Caco-2 (cell line): ENCODE measurements at regions of chr3 and their contacts with region 1.

Region 1: DNA sequence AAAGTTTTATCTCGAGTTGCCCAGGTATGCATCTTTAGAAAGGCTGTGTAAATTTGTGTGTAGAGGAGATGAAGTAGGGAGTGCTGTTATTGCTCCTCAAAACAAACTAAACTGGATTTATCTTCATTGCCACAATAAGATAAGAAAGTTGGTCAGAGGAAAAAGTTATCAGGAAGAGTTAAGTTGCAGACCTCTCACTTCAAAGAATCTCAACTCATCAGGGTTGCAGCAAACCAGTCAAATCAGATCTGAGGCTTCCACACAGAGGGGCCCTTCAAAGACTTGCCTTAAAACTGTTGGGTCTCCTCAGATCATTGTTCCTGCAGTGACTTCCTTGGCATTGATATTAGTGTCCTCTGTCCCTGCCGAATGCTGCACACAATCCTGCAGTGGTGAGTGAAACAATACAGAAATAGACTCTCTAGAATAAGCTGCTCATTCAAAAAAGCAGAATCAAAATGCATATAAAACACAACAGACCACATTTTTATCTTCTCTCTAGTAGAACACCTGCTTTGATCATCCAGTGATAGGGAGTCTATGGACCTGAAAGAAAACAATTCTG is 191.2 kb upstream of the CBLB start:
- DNase-seq: peak; percentile 49 to 51
- H3K4me3 ChIP-seq: no peak overlapping the region
- H3K4me3 Mint-ChIP-seq: no peak overlapping the region
- H3K27ac Mint-ChIP-seq: no peak overlapping the region
- H3K4me1 ChIP-seq: peaks cover 36% of the 10 kb centered on the region
- H3K4me1 Mint-ChIP-seq: peaks cover 16% of the 10 kb centered on the region
- H3K27me3 ChIP-seq: no peaks in the 10 kb centered on the region
- H3K27me3 Mint-ChIP-seq: no peaks in the 10 kb centered on the region
- CTCF ChIP-seq: no peak

Region 2: GRCh38 chr3:106013971-106014370 is 46.1 kb before region 1 on chr3:
- CTCF ChIA-PET with region 1: no interaction called
- POLR2A ChIA-PET with region 1: no interaction called
- intact Hi-C with region 1: loop called (anchors 1 kb)
- DNase-seq: peak; percentile 49 to 57
- H3K4me3 ChIP-seq: no peak overlapping the region
- H3K4me3 Mint-ChIP-seq: peak overlapping the region; percentile 49
- H3K27ac Mint-ChIP-seq: peak overlapping the region; percentile 48
- H3K4me1 ChIP-seq: peaks cover 25% of the 10 kb centered on the region
- H3K4me1 Mint-ChIP-seq: peaks cover 7% of the 10 kb centered on the region
- H3K27me3 ChIP-seq: no peaks in the 10 kb centered on the region
- H3K27me3 Mint-ChIP-seq: no peaks in the 10 kb centered on the region
- CTCF ChIP-seq: no peak

Region 3: DNA sequence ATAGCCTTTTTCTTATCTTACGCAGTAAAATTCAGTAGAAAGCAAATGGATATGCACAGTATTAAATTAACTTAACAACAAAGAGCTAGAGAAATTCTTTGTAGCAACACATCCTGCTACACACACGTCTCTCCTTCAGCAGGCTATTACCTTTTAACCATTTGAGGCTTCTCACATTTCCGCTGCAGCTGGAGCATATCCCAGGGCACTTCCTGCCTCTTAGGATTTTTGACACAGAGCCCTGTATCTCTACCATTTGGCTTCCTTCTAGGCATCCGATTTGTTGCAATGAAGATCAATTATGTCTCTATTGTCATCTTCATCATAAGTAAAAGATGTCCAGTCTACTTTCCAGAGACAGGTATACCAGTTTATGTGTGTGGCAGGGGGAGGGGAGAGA is 101.2 kb after region 1 on chr3:
- CTCF ChIA-PET with region 1: no interaction called
- POLR2A ChIA-PET with region 1: no interaction called
- intact Hi-C with region 1: no loop called
- DNase-seq: no peak
- H3K4me3 ChIP-seq: no peak overlapping the region
- H3K4me3 Mint-ChIP-seq: no peak overlapping the region
- H3K27ac Mint-ChIP-seq: no peak overlapping the region
- H3K4me1 ChIP-seq: peaks cover 9% of the 10 kb centered on the region
- H3K4me1 Mint-ChIP-seq: no peaks in the 10 kb centered on the region
- H3K27me3 ChIP-seq: no peaks in the 10 kb centered on the region
- H3K27me3 Mint-ChIP-seq: no peaks in the 10 kb centered on the region
- CTCF ChIP-seq: no peak

Region 4: DNA sequence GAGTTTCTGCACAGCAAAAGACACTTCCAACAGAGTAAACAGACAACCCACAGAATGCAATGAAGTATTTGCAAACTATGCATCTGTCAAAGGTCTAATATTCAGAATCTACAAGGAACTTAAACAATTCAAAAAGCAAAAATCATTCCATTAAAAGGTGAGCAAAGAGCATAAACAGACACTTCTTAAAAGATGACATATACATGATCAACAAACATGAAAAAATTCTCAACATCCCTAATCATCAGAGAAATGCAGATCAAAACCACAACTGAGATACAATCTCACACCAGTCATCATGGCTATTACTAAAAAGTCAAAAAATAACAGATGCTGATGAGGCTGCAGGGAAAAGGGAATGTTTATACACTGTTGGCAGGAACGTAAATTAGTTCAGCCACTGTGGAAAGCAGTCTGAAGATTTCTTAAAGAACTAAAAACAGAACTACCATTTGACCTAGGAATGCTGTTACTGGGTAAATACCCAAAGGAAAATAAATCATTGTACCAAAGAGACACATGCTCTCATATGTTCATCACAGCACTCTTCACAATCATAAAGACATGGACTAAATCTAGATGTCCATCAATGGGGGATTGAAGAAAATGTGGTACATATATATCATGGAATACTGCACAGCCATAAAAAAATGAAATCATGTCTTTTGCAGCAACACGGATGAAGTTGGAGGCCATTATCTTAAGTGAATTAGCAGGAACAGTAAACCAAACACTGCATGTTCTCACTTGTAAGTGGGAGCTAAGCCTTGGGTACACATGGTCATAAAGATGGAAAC is 202.1 kb after region 1 on chr3:
- CTCF ChIA-PET with region 1: no interaction called
- POLR2A ChIA-PET with region 1: no interaction called
- intact Hi-C with region 1: loop called (anchors 1 kb)
- DNase-seq: no peak
- H3K4me3 ChIP-seq: no peak overlapping the region
- H3K4me3 Mint-ChIP-seq: no peak overlapping the region
- H3K27ac Mint-ChIP-seq: no peak overlapping the region
- H3K4me1 ChIP-seq: peaks cover 31% of the 10 kb centered on the region
- H3K4me1 Mint-ChIP-seq: peaks cover 19% of the 10 kb centered on the region
- H3K27me3 ChIP-seq: no peaks in the 10 kb centered on the region
- H3K27me3 Mint-ChIP-seq: no peaks in the 10 kb centered on the region
- CTCF ChIP-seq: no peak